ENCODE measurements at regions of chr3 and their contacts with region 1.

Region 1: GRCh38 chr3:132343018-132343612 is 25.9 kb downstream of the ACP3 start:
- DNase-seq: no peak
- ATAC-seq: peak in 1 of 2 donors; percentile 41
- H3K4me3 ChIP-seq: no peak overlapping the region
- H3K27ac ChIP-seq: no peak overlapping the region
- H3K4me1 ChIP-seq: peaks cover 0 to 4% of the 10 kb centered on the region in 2 donors
- H3K27me3 ChIP-seq: no peaks in the 10 kb centered on the region
- CTCF ChIP-seq: peak in 4 of 5 experiments; percentile 35 to 66 (median 56)
- POLR2A ChIP-seq: no peak

Region 2: GRCh38 chr3:132034486-132035464 is 308.3 kb before region 1 on chr3 and contains the start of gene CPNE4:
- in situ Hi-C with region 1: no loop called
- intact Hi-C with region 1: loop called (anchors 5 kb)
- DNase-seq: peak; percentile 18 to 22
- ATAC-seq: no peak
- H3K4me3 ChIP-seq: peak within 1 kb of the TSS in 1 of 4 donors; percentile 12
- H3K27ac ChIP-seq: no peak within 1 kb of the TSS
- H3K4me1 ChIP-seq: no peaks in the 10 kb centered on the region
- H3K27me3 ChIP-seq: peaks cover 36 to 47% (median 42%) of the 10 kb centered on the region in 3 donors
- CTCF ChIP-seq: peak in 4 of 5 experiments; percentile 17 to 38 (median 26)
- POLR2A ChIP-seq: no peak
- total RNA-seq, gene CPNE4: not detected

Region 3: GRCh38 chr3:132210476-132211346 is 132.4 kb before region 1 on chr3:
- in situ Hi-C with region 1: no loop called
- intact Hi-C with region 1: no loop called
- DNase-seq: no peak
- ATAC-seq: no peak
- H3K4me3 ChIP-seq: no peak overlapping the region
- H3K27ac ChIP-seq: no peak overlapping the region
- H3K4me1 ChIP-seq: no peaks in the 10 kb centered on the region
- H3K27me3 ChIP-seq: peaks cover 0 to 2% (median 0%) of the 10 kb centered on the region in 3 donors
- CTCF ChIP-seq: no peak
- POLR2A ChIP-seq: no peak

Region 4: GRCh38 chr3:132253262-132253878 is 89.7 kb before region 1 on chr3:
- in situ Hi-C with region 1: loop called in 1 of 4 experiments (anchors 10 kb)
- intact Hi-C with region 1: loop called (anchors 2 kb)
- DNase-seq: no peak
- ATAC-seq: no peak
- H3K4me3 ChIP-seq: no peak overlapping the region
- H3K27ac ChIP-seq: no peak overlapping the region
- H3K4me1 ChIP-seq: no peaks in the 10 kb centered on the region
- H3K27me3 ChIP-seq: no peaks in the 10 kb centered on the region
- CTCF ChIP-seq: peak in 4 of 5 experiments; percentile 18 to 49 (median 30)
- POLR2A ChIP-seq: no peak

Measured in gastrocnemius medialis (tissue), 4 donors.